Posterior vena cava (tissue), 2 donors: ENCODE measurements at regions of chr21 and their contacts with region 1.

Region 1: DNA sequence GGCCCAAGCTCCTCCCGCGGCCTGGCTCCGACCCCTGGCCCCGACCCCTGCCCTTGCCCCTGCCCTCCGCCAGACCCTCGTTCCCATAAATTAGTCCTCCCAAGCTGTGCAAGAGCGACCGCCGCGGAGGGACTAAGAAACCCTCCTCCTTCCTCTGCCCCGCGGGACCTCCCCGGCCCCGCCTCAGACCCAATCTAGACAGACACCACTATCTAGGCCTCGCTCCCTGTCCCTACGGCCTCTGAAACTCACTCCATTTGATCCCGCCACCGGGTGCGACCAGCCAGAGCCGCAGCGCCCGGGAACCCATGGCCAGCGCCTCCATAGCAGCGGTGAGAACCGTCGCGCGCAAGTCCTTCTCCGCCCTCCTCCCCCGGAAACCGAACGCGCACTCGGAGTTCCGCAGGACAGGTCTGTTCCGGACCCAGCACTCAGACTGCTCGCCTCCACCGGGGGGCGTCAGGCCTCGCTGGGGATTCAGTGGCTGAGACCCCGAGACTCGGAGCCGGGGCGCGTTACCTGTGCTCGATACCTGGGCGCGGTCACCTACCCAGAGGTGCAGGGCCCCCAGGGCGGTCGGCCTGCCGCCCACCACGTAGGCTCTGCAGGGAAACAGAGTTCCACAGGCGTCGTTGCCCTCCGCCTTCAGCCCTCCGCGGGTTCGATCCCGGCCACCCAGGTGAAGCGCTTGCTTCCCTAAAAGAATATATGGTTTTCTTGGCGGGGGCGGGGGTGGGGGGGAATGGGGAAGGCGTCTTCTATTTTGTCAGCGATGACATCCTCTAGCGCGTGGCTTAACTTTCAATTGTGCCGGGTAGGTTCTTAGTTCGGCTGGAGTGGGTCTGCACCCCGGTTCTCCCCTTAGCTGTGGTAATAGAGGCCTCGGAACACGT is at the start of gene MRPL39:
- DNase-seq: peak; percentile 96
- total RNA-seq, gene MRPL39: 17.0 to 23.7 TPM

Region 2: DNA sequence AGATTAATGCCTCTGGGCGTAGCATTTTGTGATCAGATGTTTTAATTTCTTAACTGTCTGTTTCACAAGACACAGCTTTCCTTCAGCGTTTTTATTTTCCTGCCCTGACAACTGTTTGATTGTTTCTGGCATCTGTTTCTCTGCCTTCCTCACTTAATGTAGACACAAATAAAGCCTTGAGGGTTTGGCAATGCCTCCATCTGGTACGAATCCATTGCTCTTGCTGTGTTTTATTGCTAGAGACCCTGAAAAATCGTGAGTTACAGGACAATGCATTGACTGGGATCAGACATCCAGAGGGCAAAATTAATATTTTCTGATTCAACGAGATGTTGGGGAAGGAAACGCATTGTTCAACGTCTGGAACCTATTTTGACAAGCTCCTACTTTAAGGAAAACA is 363.6 kb before region 1 on chr21:
- intact Hi-C with region 1: no loop called
- DNase-seq: no peak

Region 3: GRCh38 chr21:25557180-25557579 is 50.2 kb before region 1 on chr21:
- intact Hi-C with region 1: no loop called
- DNase-seq: no peak

Region 4: GRCh38 chr21:25639551-25640201 is 32.3 kb after region 1 on chr21:
- intact Hi-C with region 1: loop called in 1 of 2 experiments (anchors 1 kb)
- DNase-seq: peak; percentile 78

Region 5: GRCh38 chr21:25657140-25657539 is 49.7 kb after region 1 on chr21:
- intact Hi-C with region 1: no loop called
- DNase-seq: no peak

Region 6: GRCh38 chr21:25708467-25709065 is 101.2 kb after region 1 on chr21:
- intact Hi-C with region 1: loop called (anchors 5 to 10 kb)
- DNase-seq: no peak

Region 7: DNA sequence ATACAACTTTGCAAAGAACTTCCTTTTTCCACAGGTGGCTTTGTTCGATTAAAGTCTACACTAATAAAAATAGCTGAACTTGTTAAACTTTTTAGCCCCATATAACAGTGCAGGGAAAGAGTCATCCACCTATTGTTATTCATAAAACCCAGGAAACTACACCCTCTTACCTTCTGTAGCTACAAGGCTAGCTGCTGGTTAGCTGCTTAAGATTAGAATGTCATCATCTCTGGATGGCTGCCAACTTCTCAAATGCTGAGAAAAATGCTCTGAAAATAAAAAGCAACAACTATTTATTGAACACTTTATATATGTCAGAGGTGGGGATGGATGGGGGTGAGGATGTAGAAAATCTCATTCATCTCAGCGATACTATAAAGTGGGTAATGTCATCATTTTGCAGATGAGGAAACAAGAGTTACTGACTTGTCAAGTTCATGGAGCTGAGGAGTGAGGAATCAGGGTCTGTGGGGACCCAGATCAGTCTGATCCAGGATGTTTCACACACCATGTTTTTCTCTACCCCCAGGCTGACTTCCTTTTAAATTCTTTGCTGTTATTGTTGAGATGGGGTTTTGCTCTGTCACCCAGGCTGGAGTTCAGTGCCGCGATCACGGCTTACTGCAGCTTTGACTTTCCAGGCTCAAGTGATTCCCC is 110.2 kb after region 1 on chr21:
- intact Hi-C with region 1: loop called in 1 of 2 experiments (anchors 10 kb)
- DNase-seq: no peak